ENCODE measurements at regions of chr22 and their contacts with region 1.

Region 1: GRCh38 chr22:49930739-49931412 is 12.4 kb downstream of the CRELD2 start:
- DNase-seq: peak; percentile 88
- H3K4me3 ChIP-seq: no peak overlapping the region
- H3K27ac ChIP-seq: no peak overlapping the region
- H3K4me1 ChIP-seq: peaks cover 14% of the 10 kb centered on the region
- H3K27me3 ChIP-seq: no peaks in the 10 kb centered on the region
- CTCF ChIP-seq: peak; percentile 77

Region 2: DNA sequence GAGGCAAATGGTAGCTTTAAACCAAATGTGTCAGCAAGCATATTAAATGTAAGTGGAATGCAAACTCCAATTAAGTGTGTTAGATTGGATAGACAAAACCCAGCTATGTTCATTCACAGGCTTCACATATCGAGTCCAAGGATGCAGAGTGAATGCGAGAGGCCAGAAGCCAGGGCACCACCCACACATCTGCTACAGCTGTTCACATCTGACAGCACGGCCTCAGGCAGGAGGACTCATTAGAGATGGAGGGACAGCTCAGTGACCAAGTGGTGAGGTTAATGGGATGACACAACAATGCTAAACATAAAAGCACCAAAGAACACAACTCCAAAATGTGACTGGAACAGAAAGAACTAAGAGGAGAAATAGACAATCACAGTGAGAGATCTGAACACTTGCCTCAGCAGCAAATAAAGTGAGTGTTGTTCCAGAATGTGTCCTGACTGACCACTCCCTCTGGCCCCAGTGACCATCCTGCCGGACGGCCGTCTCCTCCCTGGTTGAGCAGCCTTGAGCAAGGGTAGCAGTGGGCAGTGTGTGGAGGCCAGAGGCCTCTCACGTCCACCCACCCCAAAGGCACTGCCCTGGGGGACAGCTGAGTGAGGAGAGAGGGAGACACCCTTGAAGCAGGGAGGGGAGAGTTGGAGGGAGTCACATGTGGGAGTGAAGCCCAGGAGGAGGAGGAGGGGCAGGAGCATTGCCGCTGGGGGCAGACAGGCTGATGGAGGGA is 36.4 kb before region 1 on chr22:
- CTCF ChIA-PET with region 1: no interaction called
- POLR2A ChIA-PET with region 1: no interaction called
- intact Hi-C with region 1: no loop called
- DNase-seq: no peak
- H3K4me3 ChIP-seq: no peak overlapping the region
- H3K27ac ChIP-seq: no peak overlapping the region
- H3K4me1 ChIP-seq: no peaks in the 10 kb centered on the region
- H3K27me3 ChIP-seq: no peaks in the 10 kb centered on the region
- CTCF ChIP-seq: no peak

Region 3: GRCh38 chr22:49979587-49980264 is 48.9 kb after region 1 on chr22:
- CTCF ChIA-PET with region 1: no interaction called
- POLR2A ChIA-PET with region 1: no interaction called
- intact Hi-C with region 1: loop called (anchors 5 kb)
- DNase-seq: peak; percentile 67
- H3K4me3 ChIP-seq: no peak overlapping the region
- H3K27ac ChIP-seq: no peak overlapping the region
- H3K4me1 ChIP-seq: peaks cover 9% of the 10 kb centered on the region
- H3K27me3 ChIP-seq: peaks cover 18% of the 10 kb centered on the region
- CTCF ChIP-seq: peak; percentile 58

Region 4: DNA sequence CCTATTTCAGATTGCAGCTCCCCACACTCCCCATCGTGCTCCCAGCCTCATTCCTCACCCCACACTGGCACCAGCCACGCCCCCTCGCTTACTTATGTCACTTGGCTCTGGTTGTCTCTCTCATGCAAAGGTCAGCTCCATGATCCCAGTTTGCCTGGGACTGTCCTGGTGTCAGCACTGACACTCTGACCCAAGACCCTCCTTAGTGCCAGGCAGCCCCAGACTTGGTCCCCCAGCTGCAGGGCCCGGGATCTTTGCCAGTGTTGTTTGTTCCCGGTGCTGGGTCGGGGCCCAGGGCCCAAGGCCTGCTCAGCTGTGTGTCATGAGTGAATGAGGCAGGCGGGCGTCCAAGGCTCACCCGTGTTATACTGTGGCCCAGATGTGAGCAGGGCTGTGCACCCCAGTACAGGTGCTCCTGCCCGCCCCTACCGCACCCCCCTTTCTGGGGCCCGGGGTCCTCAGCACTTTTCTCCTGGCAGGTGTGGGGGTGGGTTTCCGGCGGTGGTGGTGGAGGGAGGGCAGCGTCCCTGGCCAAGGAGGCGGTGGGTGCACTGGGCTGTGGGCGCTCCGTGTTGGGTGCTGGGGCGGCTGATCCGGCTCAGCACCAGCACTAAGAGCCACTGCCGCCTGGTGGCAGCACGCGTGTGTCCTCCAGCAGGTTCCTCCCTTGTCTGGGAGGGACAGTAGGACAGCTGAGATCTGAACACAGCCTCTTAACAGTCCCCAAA is 62.2 kb after region 1 on chr22:
- CTCF ChIA-PET with region 1: no interaction called
- POLR2A ChIA-PET with region 1: no interaction called
- intact Hi-C with region 1: loop called (anchors 5 kb)
- DNase-seq: peak; percentile 76
- H3K4me3 ChIP-seq: no peak overlapping the region
- H3K27ac ChIP-seq: no peak overlapping the region
- H3K4me1 ChIP-seq: no peaks in the 10 kb centered on the region
- H3K27me3 ChIP-seq: no peaks in the 10 kb centered on the region
- CTCF ChIP-seq: peak; percentile 89

Region 5: GRCh38 chr22:50030297-50031188 is 99.7 kb after region 1 on chr22:
- CTCF ChIA-PET with region 1: interaction called, 31 read pairs
- POLR2A ChIA-PET with region 1: no interaction called
- intact Hi-C with region 1: loop called (anchors 1 kb)
- DNase-seq: peak; percentile 88
- H3K4me3 ChIP-seq: no peak overlapping the region
- H3K27ac ChIP-seq: no peak overlapping the region
- H3K4me1 ChIP-seq: peaks cover 4% of the 10 kb centered on the region
- H3K27me3 ChIP-seq: no peaks in the 10 kb centered on the region
- CTCF ChIP-seq: peak; percentile 95

Region 6: GRCh38 chr22:50148991-50149721 is 218.3 kb after region 1 on chr22:
- CTCF ChIA-PET with region 1: no interaction called
- POLR2A ChIA-PET with region 1: no interaction called
- intact Hi-C with region 1: loop called (anchors 5 kb)
- DNase-seq: peak; percentile 57
- H3K4me3 ChIP-seq: no peak overlapping the region
- H3K27ac ChIP-seq: no peak overlapping the region
- H3K4me1 ChIP-seq: no peaks in the 10 kb centered on the region
- H3K27me3 ChIP-seq: no peaks in the 10 kb centered on the region
- CTCF ChIP-seq: peak; percentile 78

Region 7: GRCh38 chr22:50209893-50210292 is 279.0 kb after region 1 on chr22:
- CTCF ChIA-PET with region 1: no interaction called
- POLR2A ChIA-PET with region 1: no interaction called
- intact Hi-C with region 1: loop called (anchors 5 kb)
- DNase-seq: peak; percentile 77
- H3K4me3 ChIP-seq: no peak overlapping the region
- H3K27ac ChIP-seq: no peak overlapping the region
- H3K4me1 ChIP-seq: no peaks in the 10 kb centered on the region
- H3K27me3 ChIP-seq: no peaks in the 10 kb centered on the region
- CTCF ChIP-seq: peak; percentile 92